ENCODE measurements at regions of chr15 and their contacts with region 1.

Region 1: GRCh38 chr15:40564591-40565332 is at the start of gene CCDC32:
- DNase-seq: peak; percentile 99
- H3K4me3 Mint-ChIP-seq: peak within 1 kb of the TSS; percentile 91
- H3K27ac Mint-ChIP-seq: peak within 1 kb of the TSS; percentile 94
- H3K4me1 Mint-ChIP-seq: peaks cover 28% of the 10 kb centered on the region
- H3K27me3 Mint-ChIP-seq: no peaks in the 10 kb centered on the region
- total RNA-seq, gene CCDC32: 29.9 and 33.5 TPM in 2 replicates

Region 2: GRCh38 chr15:40440743-40441564 is 123.8 kb before region 1 on chr15 and contains the start of gene BAHD1:
- intact Hi-C with region 1: loop called (anchors 5 kb)
- DNase-seq: peak; percentile 99
- H3K4me3 Mint-ChIP-seq: peak within 1 kb of the TSS; percentile 97
- H3K27ac Mint-ChIP-seq: peak within 1 kb of the TSS; percentile 87
- H3K4me1 Mint-ChIP-seq: peaks cover 42% of the 10 kb centered on the region
- H3K27me3 Mint-ChIP-seq: peaks cover 56% of the 10 kb centered on the region
- total RNA-seq, gene BAHD1: 23.9 and 26.2 TPM in 2 replicates

Region 3: DNA sequence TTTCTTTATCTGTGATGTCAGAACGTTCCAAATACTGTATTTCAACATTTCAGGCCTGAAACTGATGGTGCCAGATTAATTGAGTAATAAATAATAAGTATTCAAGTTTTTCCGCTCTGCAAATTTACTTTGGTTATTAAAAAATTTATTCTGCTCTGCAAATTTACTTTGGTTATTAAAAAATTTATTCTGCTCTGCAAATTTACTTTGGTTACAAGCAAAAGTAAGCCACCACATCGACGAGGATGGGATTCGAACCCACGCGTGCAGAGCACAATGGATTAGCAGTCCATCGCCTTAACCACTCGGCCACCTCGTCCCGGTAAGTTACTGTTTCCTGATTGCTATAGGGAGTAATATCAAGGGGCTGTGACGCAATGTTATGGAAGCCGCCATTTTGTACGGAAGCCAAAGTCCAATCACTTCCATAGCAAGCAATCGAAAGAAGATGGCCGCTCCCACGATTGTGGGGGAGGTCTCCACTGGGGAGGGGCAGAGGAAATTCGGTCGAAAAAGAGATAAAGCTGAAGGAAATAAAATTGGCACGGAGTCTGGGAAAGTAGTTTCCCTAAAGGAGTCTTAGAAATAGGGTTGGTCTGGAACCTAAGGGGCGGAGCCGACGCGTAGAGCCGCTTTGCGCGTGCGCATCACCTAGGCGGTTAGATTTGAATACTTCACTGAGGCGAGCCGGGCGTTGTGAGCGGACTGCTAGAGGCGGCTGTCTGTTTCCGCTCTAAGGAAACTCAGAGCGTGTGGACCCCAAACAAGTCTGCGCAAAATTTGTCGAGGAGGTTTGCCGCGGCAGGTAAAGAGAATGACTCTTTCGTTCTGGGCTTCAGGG is 29.0 kb after region 1 on chr15 and contains the start of gene KNL1:
- intact Hi-C with region 1: loop called (anchors 1 kb)
- DNase-seq: peak; percentile 98
- H3K4me3 Mint-ChIP-seq: peak within 1 kb of the TSS; percentile 88
- H3K27ac Mint-ChIP-seq: peak within 1 kb of the TSS; percentile 95
- H3K4me1 Mint-ChIP-seq: peaks cover 36% of the 10 kb centered on the region
- H3K27me3 Mint-ChIP-seq: no peaks in the 10 kb centered on the region
- total RNA-seq, gene KNL1: 25.3 and 25.6 TPM in 2 replicates

Region 4: GRCh38 chr15:40807028-40807887 is 242.5 kb after region 1 on chr15 and contains the starts of genes DNAJC17 and ZFYVE19:
- intact Hi-C with region 1: loop called (anchors 2 kb)
- DNase-seq: peak; percentile 98
- H3K4me3 Mint-ChIP-seq: peak within 1 kb of the TSS; percentile 93
- H3K27ac Mint-ChIP-seq: peak within 1 kb of the TSS; percentile 96
- H3K4me1 Mint-ChIP-seq: peaks cover 13% of the 10 kb centered on the region
- H3K27me3 Mint-ChIP-seq: no peaks in the 10 kb centered on the region
- total RNA-seq, gene DNAJC17: 53.8 and 54.3 TPM in 2 replicates
- total RNA-seq, gene ZFYVE19: 35.6 and 37.6 TPM in 2 replicates

Region 5: GRCh38 chr15:41116116-41116871 is 551.5 kb after region 1 on chr15 and contains the start of gene INO80:
- intact Hi-C with region 1: loop called (anchors 10 kb)
- DNase-seq: peak; percentile 99
- H3K4me3 Mint-ChIP-seq: peak within 1 kb of the TSS; percentile 91
- H3K27ac Mint-ChIP-seq: peak within 1 kb of the TSS; percentile 99
- H3K4me1 Mint-ChIP-seq: peaks cover 17% of the 10 kb centered on the region
- H3K27me3 Mint-ChIP-seq: peaks cover 2% of the 10 kb centered on the region
- total RNA-seq, gene INO80: 33.1 and 37.2 TPM in 2 replicates